BJ (cell line): ENCODE measurements at regions of chr3 and their contacts with region 1.

Region 1: GRCh38 chr3:46208167-46208704 is at the start of gene CCR1:
- DNase-seq: no peak
- H3K4me3 ChIP-seq: no peak within 1 kb of the TSS
- H3K27me3 ChIP-seq: peaks cover 2% of the 10 kb centered on the region; the same call in 1 of the 2 replicates
- CTCF ChIP-seq: peak; percentile 68
- polyA plus RNA-seq, gene CCR1: not detected in 2 replicates

Region 2: DNA sequence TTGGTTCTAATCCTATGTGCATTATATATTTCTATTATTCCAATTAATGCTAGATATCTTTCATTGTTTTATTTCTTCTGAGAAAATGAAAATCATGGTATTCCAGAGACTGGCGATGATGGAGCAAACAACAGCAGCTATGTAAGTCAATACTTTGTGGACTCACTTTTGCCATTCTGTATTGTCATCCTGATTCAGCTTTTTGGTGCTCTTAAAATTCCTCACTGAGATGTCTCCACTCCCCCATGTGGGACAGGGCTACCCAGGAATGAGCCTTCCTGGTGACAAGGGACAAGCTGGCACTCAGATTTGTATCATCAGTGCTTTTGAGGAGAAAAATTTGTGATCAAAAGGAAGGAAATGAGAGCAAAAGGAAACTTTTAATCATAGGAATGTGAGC is 124.3 kb before region 1 on chr3:
- CTCF ChIA-PET with region 1: interaction called, 33 read pairs
- POLR2A ChIA-PET with region 1: no interaction called
- DNase-seq: no peak
- H3K4me3 ChIP-seq: no peak overlapping the region
- H3K27me3 ChIP-seq: no peaks in the 10 kb centered on the region
- CTCF ChIP-seq: no peak

Region 3: GRCh38 chr3:46242120-46242519 is 33.9 kb after region 1 on chr3 and contains the start of gene CCR3:
- CTCF ChIA-PET with region 1: no interaction called
- POLR2A ChIA-PET with region 1: no interaction called
- DNase-seq: no peak
- H3K4me3 ChIP-seq: no peak within 1 kb of the TSS
- H3K27me3 ChIP-seq: peaks cover 1% of the 10 kb centered on the region
- CTCF ChIP-seq: no peak
- polyA plus RNA-seq, gene CCR3: not detected in 2 replicates